Activated CD4-positive, alpha-beta memory T cell treated with anti-CD3 and anti-CD28 coated beads for 36 hours (primary cell): ENCODE measurements at regions of chr2 and their contacts with region 1.

Region 1: DNA sequence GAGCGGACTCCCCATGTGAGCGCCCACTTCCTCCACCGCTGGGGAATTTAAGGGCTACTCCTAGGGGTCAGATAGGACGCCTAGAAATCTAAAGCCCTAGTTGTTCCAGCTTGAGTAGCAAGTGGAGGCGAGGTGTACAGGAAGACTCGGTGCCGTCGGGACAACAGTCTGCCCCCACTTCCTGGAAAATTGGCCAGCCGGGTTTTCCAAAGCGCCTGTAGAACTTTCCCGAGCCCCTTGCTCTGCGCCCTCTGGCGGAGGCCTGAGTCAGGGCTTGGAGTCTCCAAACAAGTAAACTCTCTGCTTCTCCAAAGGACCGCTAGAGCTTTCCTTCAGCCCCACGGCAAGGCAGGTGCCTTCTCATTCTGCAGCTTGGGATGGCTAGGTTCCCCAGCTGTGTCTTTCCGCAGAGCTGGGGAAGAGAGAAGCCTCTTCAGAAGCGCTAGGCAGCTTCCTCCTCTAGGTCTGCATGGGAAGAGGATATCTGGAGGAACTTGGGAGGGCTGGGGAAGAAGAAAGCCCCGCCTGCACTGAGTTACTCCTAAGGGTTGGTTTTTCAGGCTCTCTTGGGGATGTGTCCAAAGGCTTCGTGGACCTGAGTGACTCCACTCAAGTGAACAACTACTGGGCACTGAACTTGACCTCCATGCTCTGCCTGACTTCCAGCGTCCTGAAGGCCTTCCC is 688 bp downstream of the SPR start:
- DNase-seq: peak; percentile 71
- H3K4me3 Mint-ChIP-seq: peak overlapping the region; percentile 69
- H3K27ac Mint-ChIP-seq: no peak overlapping the region
- H3K4me1 Mint-ChIP-seq: peaks cover 11% of the 10 kb centered on the region
- H3K27me3 Mint-ChIP-seq: peaks cover 64% of the 10 kb centered on the region

Region 2: GRCh38 chr2:72825241-72826155 is 62.4 kb before region 1 on chr2 and contains the start of gene EXOC6B:
- CTCF ChIA-PET with region 1: no interaction called
- POLR2A ChIA-PET with region 1: no interaction called
- intact Hi-C with region 1: no loop called
- DNase-seq: peak; percentile 89
- H3K4me3 Mint-ChIP-seq: peak within 1 kb of the TSS; percentile 83
- H3K27ac Mint-ChIP-seq: peak within 1 kb of the TSS; percentile 2
- H3K4me1 Mint-ChIP-seq: peaks cover 38% of the 10 kb centered on the region
- H3K27me3 Mint-ChIP-seq: no peaks in the 10 kb centered on the region
- total RNA-seq, gene EXOC6B: 8.5 to 8.6 TPM

Region 3: DNA sequence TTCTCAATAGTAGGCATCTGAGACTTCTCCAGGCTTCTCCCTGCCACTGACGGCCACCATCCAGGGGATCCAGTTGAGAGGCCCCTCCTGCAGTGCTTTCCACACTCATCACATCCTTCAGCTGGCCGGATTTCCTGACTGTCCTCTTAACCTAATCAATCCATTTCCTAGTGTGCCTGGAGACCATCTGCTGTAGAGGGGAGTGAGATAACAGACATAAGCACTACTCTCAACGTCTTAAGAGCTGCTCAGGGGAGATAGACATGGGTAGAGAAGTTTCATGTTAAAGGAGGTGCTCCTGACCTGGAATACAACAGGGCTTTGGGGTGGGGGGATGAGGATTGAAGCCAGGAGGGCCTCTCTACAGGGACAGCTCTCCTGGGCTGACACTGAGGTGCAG is 13.5 kb after region 1 on chr2:
- CTCF ChIA-PET with region 1: interaction called, 18 read pairs
- POLR2A ChIA-PET with region 1: no interaction called
- intact Hi-C with region 1: no loop called
- DNase-seq: no peak
- H3K4me3 Mint-ChIP-seq: no peak overlapping the region
- H3K27ac Mint-ChIP-seq: no peak overlapping the region
- H3K4me1 Mint-ChIP-seq: no peaks in the 10 kb centered on the region
- H3K27me3 Mint-ChIP-seq: peaks cover 22% of the 10 kb centered on the region

Region 4: GRCh38 chr2:72934683-72935610 is 47.1 kb after region 1 on chr2:
- CTCF ChIA-PET with region 1: interaction called, 17 read pairs
- POLR2A ChIA-PET with region 1: no interaction called
- intact Hi-C with region 1: no loop called
- DNase-seq: no peak
- H3K4me3 Mint-ChIP-seq: no peak overlapping the region
- H3K27ac Mint-ChIP-seq: no peak overlapping the region
- H3K4me1 Mint-ChIP-seq: no peaks in the 10 kb centered on the region
- H3K27me3 Mint-ChIP-seq: peaks cover 6% of the 10 kb centered on the region

Region 5: DNA sequence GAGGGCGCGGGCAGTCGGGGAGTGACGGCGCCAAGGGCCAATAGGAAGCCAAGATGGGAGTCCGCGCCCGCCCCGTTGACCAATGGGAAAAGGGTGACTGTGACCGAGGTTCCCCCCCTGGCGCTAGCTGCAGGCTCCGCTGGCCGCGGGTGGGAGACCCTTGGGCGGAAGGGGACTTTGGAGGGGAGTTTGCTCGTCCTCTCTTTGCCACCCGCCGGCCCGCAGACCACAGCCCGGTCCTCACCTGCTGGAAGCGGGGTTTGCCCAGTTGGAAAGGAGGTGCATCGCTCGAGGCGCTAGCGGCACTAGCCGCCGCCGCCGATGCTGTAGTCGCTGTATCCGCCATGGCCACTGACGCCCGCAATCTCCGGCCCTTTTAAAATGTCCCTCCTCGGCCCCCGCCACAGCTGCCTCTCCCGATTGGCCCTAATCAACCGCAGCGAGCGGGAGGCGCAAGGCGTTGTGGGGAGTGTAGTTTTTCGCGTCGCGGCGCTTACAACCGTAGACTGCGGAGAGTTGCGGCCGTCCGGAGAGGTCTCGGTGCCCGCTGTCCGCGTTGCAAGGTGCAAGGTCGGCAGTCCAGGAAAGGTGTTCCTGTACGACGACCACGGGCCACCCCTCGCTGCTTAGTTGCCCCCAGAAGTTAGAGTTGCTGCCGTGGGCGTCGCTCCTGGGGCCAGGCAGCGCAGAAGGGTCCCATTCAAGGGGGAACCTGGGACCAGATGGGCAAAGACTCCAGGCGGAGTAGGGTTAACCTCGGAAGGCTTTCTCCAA is 183.7 kb after region 1 on chr2 and contains the start of gene SFXN5:
- CTCF ChIA-PET with region 1: interaction called, 7 read pairs
- POLR2A ChIA-PET with region 1: no interaction called
- intact Hi-C with region 1: loop called (anchors 5 kb)
- DNase-seq: peak; percentile 97
- H3K4me3 Mint-ChIP-seq: peak within 1 kb of the TSS; percentile 80
- H3K27ac Mint-ChIP-seq: peak within 1 kb of the TSS; percentile 71
- H3K4me1 Mint-ChIP-seq: peaks cover 23% of the 10 kb centered on the region
- H3K27me3 Mint-ChIP-seq: no peaks in the 10 kb centered on the region
- total RNA-seq, gene SFXN5: 4.5 to 7.6 TPM

Region 6: GRCh38 chr2:73163483-73164367 is 275.8 kb after region 1 on chr2:
- CTCF ChIA-PET with region 1: interaction called, 5 read pairs
- POLR2A ChIA-PET with region 1: no interaction called
- intact Hi-C with region 1: loop called (anchors 1 kb)
- DNase-seq: peak; percentile 81
- H3K4me3 Mint-ChIP-seq: no peak overlapping the region
- H3K27ac Mint-ChIP-seq: no peak overlapping the region
- H3K4me1 Mint-ChIP-seq: peaks cover 2% of the 10 kb centered on the region
- H3K27me3 Mint-ChIP-seq: peaks cover 7% of the 10 kb centered on the region

Region 7: DNA sequence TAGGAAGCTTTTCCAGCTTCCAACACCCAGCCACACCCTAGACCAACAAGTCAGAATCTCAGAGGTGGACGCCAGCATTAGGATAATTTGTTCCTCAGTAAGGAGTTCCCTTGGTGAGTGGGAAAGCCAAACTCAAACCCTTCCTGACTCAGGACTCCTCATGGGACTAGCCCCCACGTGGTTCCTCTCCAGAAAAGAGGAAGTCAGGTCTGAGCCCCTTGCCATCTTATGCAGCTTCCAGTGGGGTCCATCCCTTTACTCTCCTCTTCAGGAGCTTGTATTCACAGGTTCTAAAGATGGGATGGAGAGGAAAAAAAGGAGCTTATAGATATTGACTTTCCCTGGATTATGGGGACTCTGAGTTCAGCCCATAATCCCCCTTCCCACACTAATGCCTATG is 299.7 kb after region 1 on chr2:
- CTCF ChIA-PET with region 1: no interaction called
- POLR2A ChIA-PET with region 1: no interaction called
- intact Hi-C with region 1: no loop called
- DNase-seq: no peak
- H3K4me3 Mint-ChIP-seq: no peak overlapping the region
- H3K27ac Mint-ChIP-seq: no peak overlapping the region
- H3K4me1 Mint-ChIP-seq: no peaks in the 10 kb centered on the region
- H3K27me3 Mint-ChIP-seq: peaks cover 5% of the 10 kb centered on the region

Region 8: DNA sequence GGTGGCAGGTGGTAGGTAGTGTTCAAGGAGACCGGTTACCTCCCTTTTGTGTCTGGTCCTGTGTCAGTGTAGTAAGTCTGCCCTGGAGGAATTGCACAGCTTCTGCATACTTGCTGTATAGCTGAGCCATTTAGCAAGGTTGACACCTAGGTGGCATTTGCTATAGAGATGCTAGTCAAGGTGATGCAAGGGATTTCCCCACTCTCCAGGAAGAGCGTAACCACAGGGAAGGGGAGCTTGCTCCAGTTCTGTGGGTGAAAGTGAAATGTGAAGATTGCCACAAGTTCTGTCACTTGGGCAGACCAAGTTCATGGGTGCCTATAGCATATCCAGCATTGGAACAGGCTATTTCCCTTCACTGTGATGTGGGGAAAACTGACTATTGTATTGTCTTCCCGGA is 726.2 kb after region 1 on chr2:
- CTCF ChIA-PET with region 1: no interaction called
- POLR2A ChIA-PET with region 1: no interaction called
- intact Hi-C with region 1: no loop called
- DNase-seq: peak; percentile 31
- H3K4me3 Mint-ChIP-seq: no peak overlapping the region
- H3K27ac Mint-ChIP-seq: no peak overlapping the region
- H3K4me1 Mint-ChIP-seq: peaks cover 6% of the 10 kb centered on the region
- H3K27me3 Mint-ChIP-seq: no peaks in the 10 kb centered on the region

Region 9: GRCh38 chr2:73970850-73971471 is 1083.1 kb after region 1 on chr2:
- CTCF ChIA-PET with region 1: no interaction called
- POLR2A ChIA-PET with region 1: no interaction called
- intact Hi-C with region 1: no loop called
- DNase-seq: peak; percentile 75
- H3K4me3 Mint-ChIP-seq: peak overlapping the region; percentile 46
- H3K27ac Mint-ChIP-seq: peak overlapping the region; percentile 80
- H3K4me1 Mint-ChIP-seq: peaks cover 34% of the 10 kb centered on the region
- H3K27me3 Mint-ChIP-seq: no peaks in the 10 kb centered on the region